ENCODE measurements at regions of chr21 and their contacts with region 1.

Region 1: DNA sequence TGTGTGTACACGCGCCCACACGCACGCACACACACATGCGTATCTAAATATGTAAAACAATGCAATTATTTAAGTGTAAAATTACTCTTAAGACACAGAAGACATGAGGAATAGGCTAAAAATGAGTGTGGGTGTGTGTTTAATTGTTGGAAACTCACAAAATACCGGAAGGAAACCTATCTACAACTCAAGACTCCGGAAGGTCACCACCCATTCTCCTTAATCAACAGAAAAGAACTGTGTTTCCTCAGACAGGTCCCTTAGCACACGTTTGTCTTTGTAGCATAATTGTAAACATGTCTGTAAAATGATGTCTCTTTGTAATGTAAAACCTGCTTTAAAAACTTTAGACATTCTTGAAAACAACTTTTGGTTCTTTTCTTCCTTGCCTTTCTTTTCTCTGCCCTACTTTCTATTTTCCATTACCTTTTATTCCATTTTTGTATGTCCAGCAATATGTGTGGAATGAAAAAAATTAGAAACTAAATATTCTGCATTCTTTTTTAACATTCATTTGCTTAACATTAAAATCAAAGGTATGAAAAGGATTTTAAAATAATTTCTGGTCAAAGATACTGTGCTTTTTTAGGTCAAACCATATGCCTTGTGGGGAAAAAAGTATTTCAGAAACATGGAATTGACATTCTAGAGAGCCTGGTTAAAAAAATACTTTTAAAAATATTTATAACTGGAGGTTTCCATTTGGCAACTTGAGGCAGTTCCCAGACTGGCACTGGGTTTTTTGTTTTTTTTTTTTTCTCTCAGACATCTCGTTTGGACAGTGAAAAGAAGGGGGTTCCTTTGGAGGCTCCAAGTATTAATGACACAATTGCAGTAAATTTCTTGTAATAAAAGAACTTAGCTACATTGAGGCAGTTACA is 46.2 kb downstream of the ATP5PF start:
- DNase-seq: no peak
- H3K4me3 ChIP-seq: no peak overlapping the region
- H3K27ac ChIP-seq: peak overlapping the region in 1 of 2 donors; percentile 6
- H3K4me1 ChIP-seq: peaks cover 0 to 5% of the 10 kb centered on the region in 2 donors
- H3K27me3 ChIP-seq: no peaks in the 10 kb centered on the region
- CTCF ChIP-seq: no peak

Region 2: GRCh38 chr21:25639551-25640201 is 48.8 kb before region 1 on chr21:
- intact Hi-C with region 1: loop called (anchors 5 kb)
- DNase-seq: peak in 1 of 2 donors; percentile 67
- H3K4me3 ChIP-seq: peak overlapping the region; percentile 75 to 82
- H3K27ac ChIP-seq: peak overlapping the region; percentile 66 to 77
- H3K4me1 ChIP-seq: peaks cover 0 to 6% of the 10 kb centered on the region in 2 donors
- H3K27me3 ChIP-seq: no peaks in the 10 kb centered on the region
- CTCF ChIP-seq: peak; percentile 12 to 45 (median 42)

Region 3: DNA sequence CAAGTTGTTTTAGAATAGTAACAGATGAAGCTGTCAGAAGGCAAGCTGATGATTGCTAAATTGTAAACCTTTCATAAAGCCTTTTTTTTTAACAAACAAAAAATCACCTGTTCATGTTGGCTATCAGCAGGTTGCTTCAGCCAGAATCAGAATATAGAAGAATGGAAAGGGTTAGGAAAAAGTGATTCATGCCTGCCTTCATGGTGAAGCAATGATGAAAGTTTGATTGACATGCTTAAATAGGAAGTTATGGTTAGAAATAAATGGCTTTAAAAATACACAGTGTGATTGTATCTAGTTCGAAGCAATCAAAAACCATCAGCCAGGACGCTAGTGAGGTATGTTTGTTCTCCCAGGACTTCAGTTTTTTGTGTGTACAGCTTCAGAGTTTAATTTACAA is 84.2 kb after region 1 on chr21:
- intact Hi-C with region 1: no loop called
- DNase-seq: no peak
- H3K4me3 ChIP-seq: no peak overlapping the region
- H3K27ac ChIP-seq: no peak overlapping the region
- H3K4me1 ChIP-seq: no peaks in the 10 kb centered on the region
- H3K27me3 ChIP-seq: no peaks in the 10 kb centered on the region
- CTCF ChIP-seq: no peak

Region 4: DNA sequence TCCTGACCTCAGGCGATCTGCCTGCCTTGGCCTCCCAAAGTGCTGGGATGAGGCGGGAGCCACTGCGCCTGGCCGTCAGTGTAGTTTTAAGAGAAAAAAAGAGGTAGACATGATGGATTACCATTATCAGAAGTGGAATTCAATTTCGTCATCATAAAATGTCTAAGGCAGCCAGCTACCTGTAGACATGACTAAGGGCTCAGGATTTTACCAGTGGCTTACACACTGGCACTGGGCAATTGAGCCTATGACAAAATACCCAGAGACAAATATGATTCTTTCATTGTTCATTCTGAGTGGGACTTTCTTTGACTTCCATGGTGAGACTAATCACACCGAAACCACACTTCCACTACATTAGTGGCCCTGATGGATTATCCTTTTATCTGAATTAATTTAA is 227.7 kb after region 1 on chr21:
- intact Hi-C with region 1: no loop called
- DNase-seq: no peak
- H3K4me3 ChIP-seq: no peak overlapping the region
- H3K27ac ChIP-seq: no peak overlapping the region
- H3K4me1 ChIP-seq: no peaks in the 10 kb centered on the region
- H3K27me3 ChIP-seq: no peaks in the 10 kb centered on the region
- CTCF ChIP-seq: no peak

Measured in ascending aorta (tissue), 2 donors.